Uterus (tissue), 4 donors: ENCODE measurements at regions of chr13 and their contacts with region 1.

Region 1: GRCh38 chr13:40230833-40231266 is 435.6 kb downstream of the FOXO1 start:
- DNase-seq: peak in 1 of 2 donors; percentile 56
- H3K4me3 ChIP-seq: no peak overlapping the region
- H3K27ac ChIP-seq: peak overlapping the region; percentile 94 to 96
- H3K4me1 ChIP-seq: peaks cover 0 to 14% of the 10 kb centered on the region in 2 donors
- H3K27me3 ChIP-seq: no peaks in the 10 kb centered on the region
- CTCF ChIP-seq: no peak
- POLR2A ChIP-seq: no peak

Region 2: GRCh38 chr13:39929583-39929982 is 301.3 kb before region 1 on chr13:
- intact Hi-C with region 1: no loop called
- DNase-seq: no peak
- H3K4me3 ChIP-seq: no peak overlapping the region
- H3K27ac ChIP-seq: no peak overlapping the region
- H3K4me1 ChIP-seq: no peaks in the 10 kb centered on the region
- H3K27me3 ChIP-seq: no peaks in the 10 kb centered on the region
- CTCF ChIP-seq: no peak
- POLR2A ChIP-seq: no peak

Region 3: GRCh38 chr13:40304391-40304790 is 73.5 kb after region 1 on chr13:
- intact Hi-C with region 1: no loop called
- DNase-seq: no peak
- H3K4me3 ChIP-seq: no peak overlapping the region
- H3K27ac ChIP-seq: no peak overlapping the region
- H3K4me1 ChIP-seq: no peaks in the 10 kb centered on the region
- H3K27me3 ChIP-seq: no peaks in the 10 kb centered on the region
- CTCF ChIP-seq: no peak
- POLR2A ChIP-seq: no peak

Region 4: DNA sequence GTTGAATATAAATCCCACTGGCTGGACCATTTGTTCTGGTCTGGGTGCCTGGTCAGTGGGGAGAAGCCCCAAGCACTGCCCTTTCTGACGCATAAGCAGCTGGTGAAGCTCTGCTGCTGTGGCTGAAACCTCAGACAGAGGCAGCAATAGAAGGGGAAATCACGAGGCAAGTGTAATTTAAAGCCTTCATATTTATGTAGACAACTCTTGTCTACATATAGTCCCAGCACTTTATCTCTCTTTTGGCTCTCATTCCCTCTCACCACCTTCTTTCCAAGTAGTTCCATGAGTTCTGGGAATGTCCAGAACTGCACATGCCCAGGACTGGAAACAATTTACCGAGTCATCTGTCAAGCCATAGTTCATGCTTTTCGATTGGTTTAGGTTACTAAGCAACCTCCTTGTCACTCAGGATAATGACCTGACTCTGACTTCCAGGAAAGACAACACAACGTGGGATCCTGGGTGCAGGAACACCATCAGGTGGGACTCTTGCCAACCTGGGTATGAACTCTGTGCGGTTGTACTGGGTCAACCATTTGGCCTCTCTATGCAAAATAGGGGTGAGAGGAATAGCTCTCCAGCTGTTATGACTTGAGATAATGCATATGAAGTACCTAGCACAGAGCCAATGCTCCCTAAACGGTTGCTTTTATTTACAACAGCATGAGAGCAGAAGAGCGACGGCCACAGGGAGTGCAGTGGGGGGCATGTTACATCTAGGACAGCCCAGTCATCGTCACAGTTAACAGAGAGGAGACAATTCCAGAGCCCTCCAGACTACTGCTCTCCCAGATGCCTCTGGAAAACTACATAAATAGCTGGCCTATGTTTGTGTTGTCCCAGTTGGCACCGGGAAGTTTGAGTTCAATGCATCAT is 113.7 kb after region 1 on chr13:
- intact Hi-C with region 1: no loop called
- DNase-seq: no peak
- H3K4me3 ChIP-seq: no peak overlapping the region
- H3K27ac ChIP-seq: no peak overlapping the region
- H3K4me1 ChIP-seq: no peaks in the 10 kb centered on the region
- H3K27me3 ChIP-seq: no peaks in the 10 kb centered on the region
- CTCF ChIP-seq: no peak
- POLR2A ChIP-seq: no peak

Region 5: GRCh38 chr13:40401911-40402776 is 171.3 kb after region 1 on chr13:
- intact Hi-C with region 1: loop called (anchors 10 kb)
- DNase-seq: peak; percentile 98 to 100
- H3K4me3 ChIP-seq: no peak overlapping the region
- H3K27ac ChIP-seq: peak overlapping the region; percentile 89 to 90
- H3K4me1 ChIP-seq: peaks cover 10 to 39% of the 10 kb centered on the region in 2 donors
- H3K27me3 ChIP-seq: no peaks in the 10 kb centered on the region
- CTCF ChIP-seq: no peak
- POLR2A ChIP-seq: peak in 1 of 2 donors; percentile 39

Region 6: DNA sequence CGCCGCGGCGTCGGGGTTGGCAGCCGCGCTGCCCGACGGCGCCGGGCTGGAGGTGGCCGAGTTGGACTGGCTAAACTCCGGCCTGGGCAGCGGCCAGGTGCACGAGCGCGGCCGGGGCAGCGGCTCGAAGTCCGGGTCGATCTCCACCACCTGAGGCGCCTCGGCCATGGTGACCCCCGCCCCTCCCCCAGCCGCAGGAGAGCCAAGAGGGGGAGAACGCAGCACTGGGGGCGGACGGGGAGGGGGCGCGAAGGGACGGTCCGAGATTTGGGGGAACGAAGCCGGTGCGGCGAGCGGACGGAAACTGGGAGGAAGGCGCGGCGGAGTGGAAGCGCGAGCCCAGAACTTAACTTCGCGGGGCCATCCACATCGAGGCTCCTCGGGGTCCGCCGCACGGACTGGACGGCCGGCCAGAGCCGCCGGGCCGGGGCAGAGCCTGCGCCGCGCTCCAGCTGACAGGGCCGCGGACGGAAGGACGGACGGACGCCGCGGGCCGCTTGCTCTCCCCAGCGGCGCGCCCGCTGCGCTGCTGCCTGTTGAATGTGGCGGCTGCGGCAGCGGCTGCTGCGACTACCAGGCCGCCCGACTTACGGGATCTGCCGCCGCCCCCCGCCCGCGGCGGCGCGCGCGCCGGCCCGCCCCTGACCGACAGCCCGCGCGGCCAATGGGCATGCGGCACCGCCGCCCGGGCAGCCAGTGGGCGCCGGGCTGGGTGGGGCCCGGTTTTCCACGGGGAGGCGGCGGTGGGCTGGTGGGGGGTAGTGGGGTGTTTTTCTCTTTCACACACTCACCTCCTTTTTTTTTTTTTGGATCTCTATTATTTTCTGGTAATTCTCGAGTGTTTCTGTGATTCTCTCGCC is 435.4 kb after region 1 on chr13 and contains the start of gene FOXO1:
- intact Hi-C with region 1: loop called (anchors 5 kb)
- DNase-seq: peak; percentile 88 to 94
- H3K4me3 ChIP-seq: peak within 1 kb of the TSS; percentile 62 to 99
- H3K27ac ChIP-seq: peak within 1 kb of the TSS; percentile 100
- H3K4me1 ChIP-seq: no peaks in the 10 kb centered on the region
- H3K27me3 ChIP-seq: no peaks in the 10 kb centered on the region
- CTCF ChIP-seq: peak in 2 of 4 experiments; percentile 7 to 8
- POLR2A ChIP-seq: peak; percentile 97 to 100
- total RNA-seq, gene FOXO1: 46.8 to 130 (median 60.9) TPM